ENCODE measurements at regions of chr17 and their contacts with region 1.

Region 1: GRCh38 chr17:49997791-49998703 is 3.0 kb upstream of the DLX3 start:
- DNase-seq: peak; percentile 86
- H3K4me3 Mint-ChIP-seq: no peak overlapping the region
- H3K27ac Mint-ChIP-seq: no peak overlapping the region
- H3K4me1 Mint-ChIP-seq: peaks cover 33% of the 10 kb centered on the region
- H3K27me3 Mint-ChIP-seq: peaks cover 72% of the 10 kb centered on the region

Region 2: DNA sequence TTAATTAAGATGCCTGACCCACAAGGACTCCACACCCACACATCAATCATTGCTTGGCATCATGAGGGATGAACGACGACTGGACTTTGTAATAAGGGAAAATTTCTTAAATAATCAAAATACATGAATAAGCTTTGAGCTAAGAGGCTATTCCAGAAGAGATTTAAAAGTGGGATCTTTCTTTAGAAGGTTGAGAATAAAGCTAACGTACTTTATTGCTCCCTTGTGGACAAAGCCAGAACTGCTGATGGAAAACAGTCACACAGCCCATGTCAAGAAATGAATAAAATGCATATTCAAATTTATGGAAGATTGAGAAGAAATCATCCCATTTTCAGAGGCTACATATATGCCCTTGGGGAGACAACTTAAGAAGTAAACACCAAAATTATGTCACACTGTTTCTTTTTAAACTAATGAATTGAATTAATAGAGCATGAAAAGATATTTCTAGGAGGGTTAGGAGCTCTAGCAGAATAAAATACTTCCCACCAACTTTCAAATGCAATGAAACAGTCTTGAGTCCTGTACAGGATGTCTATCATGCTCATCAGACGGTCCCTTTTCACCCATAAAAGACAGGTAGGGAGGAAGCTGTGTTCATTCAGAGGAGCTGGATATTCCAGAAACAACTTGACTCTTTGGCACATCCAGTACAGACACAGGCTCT is 707.2 kb before region 1 on chr17:
- CTCF ChIA-PET with region 1: no interaction called
- POLR2A ChIA-PET with region 1: no interaction called
- DNase-seq: no peak
- H3K4me3 Mint-ChIP-seq: no peak overlapping the region
- H3K27ac Mint-ChIP-seq: no peak overlapping the region
- H3K4me1 Mint-ChIP-seq: peaks cover 7% of the 10 kb centered on the region
- H3K27me3 Mint-ChIP-seq: no peaks in the 10 kb centered on the region

Region 3: GRCh38 chr17:49567871-49568694 is 430.0 kb before region 1 on chr17:
- CTCF ChIA-PET with region 1: interaction called, 20 read pairs
- POLR2A ChIA-PET with region 1: interaction called, 3 read pairs
- DNase-seq: peak; percentile 85
- H3K4me3 Mint-ChIP-seq: peak overlapping the region; percentile 63
- H3K27ac Mint-ChIP-seq: no peak overlapping the region
- H3K4me1 Mint-ChIP-seq: peaks cover 32% of the 10 kb centered on the region
- H3K27me3 Mint-ChIP-seq: peaks cover 41% of the 10 kb centered on the region

Region 4: GRCh38 chr17:49873466-49873865 is 124.6 kb before region 1 on chr17:
- CTCF ChIA-PET with region 1: interaction called, 63 read pairs
- POLR2A ChIA-PET with region 1: no interaction called
- DNase-seq: no peak
- H3K4me3 Mint-ChIP-seq: no peak overlapping the region
- H3K27ac Mint-ChIP-seq: no peak overlapping the region
- H3K4me1 Mint-ChIP-seq: peaks cover 5% of the 10 kb centered on the region
- H3K27me3 Mint-ChIP-seq: peaks cover 2% of the 10 kb centered on the region

Region 5: GRCh38 chr17:49920064-49920785 is 77.8 kb before region 1 on chr17:
- CTCF ChIA-PET with region 1: interaction called, 11 read pairs
- POLR2A ChIA-PET with region 1: no interaction called
- DNase-seq: no peak
- H3K4me3 Mint-ChIP-seq: no peak overlapping the region
- H3K27ac Mint-ChIP-seq: no peak overlapping the region
- H3K4me1 Mint-ChIP-seq: no peaks in the 10 kb centered on the region
- H3K27me3 Mint-ChIP-seq: peaks cover 29% of the 10 kb centered on the region

Region 6: DNA sequence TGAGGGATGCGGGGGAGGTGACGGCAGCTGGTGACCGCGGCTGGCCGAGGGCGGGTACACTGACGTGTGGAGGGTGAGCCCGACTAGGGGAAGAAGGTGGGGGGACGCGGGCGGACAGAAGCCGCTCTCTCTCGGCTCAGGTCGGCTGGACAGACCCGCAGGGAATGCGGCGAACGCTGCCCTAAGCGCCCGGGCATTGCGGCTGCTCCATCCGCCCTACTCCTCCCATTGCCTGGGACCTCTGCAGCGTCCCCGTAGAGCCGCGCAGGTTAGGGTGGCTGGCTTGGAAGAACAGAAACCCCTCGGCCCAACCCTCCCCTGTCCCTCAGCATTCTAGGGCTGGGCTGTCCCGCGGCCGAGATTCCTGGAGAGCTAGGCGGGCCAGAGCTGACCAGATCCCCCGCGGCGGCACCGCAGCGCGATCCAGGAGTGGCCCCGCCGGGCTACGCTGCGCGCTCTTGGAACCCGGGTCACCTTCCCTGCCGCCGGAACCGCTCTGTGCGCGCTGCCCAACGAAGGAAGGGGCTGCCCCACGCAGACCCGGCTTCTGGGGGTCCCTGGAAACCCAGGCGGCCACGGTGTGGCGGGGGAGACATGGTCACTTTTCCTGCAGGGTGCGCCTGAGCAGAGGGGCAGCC is 26.1 kb before region 1 on chr17:
- CTCF ChIA-PET with region 1: interaction called, 21 read pairs
- POLR2A ChIA-PET with region 1: interaction called, 3 read pairs
- DNase-seq: no peak
- H3K4me3 Mint-ChIP-seq: no peak overlapping the region
- H3K27ac Mint-ChIP-seq: no peak overlapping the region
- H3K4me1 Mint-ChIP-seq: peaks cover 27% of the 10 kb centered on the region
- H3K27me3 Mint-ChIP-seq: peaks cover 84% of the 10 kb centered on the region

Region 7: DNA sequence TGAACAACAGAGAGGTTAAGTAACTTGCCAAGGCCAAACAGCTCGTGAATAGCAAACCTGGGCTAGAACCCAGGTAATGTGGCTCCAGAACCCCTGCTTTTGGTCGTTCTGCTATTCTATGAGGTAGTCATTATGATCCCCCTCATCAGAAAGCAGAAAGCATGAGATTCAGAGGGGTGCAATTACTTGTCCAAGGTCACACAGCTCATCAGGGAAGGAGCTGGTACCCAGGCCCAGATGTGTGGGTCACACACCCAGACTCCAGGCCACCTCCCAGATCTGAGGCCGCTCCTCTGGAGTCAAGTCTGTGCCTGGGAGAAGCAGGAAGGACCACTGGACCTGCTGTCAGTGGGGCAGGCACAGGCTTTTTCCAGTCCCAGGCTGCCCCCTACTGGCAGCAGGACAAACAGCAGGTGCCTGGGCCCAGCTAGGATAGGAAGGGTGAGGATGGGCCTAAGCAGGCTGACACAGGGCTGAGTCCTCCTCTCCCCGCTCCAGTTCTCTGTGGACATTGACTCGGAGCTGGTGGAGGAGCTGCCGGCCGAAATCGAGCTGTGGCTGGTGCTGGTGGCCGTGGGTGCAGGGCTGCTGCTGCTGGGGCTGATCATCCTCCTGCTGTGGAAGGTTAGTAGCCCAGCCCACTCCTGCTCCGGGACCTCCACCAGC is 89.3 kb after region 1 on chr17:
- CTCF ChIA-PET with region 1: interaction called, 21 read pairs
- POLR2A ChIA-PET with region 1: no interaction called
- DNase-seq: peak; percentile 83
- H3K4me3 Mint-ChIP-seq: no peak overlapping the region
- H3K27ac Mint-ChIP-seq: no peak overlapping the region
- H3K4me1 Mint-ChIP-seq: no peaks in the 10 kb centered on the region
- H3K27me3 Mint-ChIP-seq: no peaks in the 10 kb centered on the region